Lower lobe of right lung (tissue), 2 donors: ENCODE measurements at regions of chr12 and their contacts with region 1.

Region 1: DNA sequence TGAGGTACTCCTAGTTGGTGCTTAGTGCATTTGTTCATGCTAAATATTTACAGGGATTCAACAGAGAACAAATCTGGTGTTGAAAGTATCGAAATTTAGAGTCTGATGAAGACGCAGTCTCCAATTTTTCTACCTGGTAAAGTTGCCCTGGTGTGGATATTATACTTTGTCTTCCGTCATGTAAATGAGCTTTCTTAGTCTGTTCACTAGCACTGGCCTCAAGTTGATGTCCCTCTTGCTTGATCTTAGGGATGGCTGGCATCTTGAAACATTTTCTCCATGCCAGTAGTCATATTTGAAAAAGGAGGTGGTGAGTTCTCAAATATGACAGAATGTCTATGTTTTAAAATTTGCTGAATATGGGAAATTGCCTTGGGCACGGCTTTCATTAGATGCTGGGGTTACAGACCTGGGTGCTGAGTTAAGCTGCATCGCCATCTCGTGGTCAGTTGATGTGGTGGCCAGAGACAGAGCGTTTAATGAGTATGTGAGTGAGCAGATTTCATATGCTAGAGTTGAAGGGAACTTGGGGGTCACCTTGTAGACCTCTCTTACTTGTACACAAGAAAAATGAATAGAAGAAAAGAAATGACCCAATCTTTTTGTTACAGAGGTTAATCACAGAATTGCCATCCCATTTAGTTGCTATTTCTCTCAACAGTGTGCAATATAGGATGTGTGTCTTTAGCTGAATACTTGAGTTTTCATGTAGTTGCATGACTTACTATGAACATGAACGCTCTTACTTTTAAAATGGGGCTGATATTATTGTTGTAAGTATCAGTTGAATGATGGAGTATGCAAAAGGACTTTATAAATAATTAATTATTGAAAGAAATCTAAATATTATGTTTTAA is 172.8 kb upstream of the DCN start:
- DNase-seq: peak; percentile 64
- ATAC-seq: peak; percentile 89 to 91
- H3K4me3 ChIP-seq: no peak overlapping the region
- H3K27ac ChIP-seq: no peak overlapping the region
- H3K4me1 ChIP-seq: no peaks in the 10 kb centered on the region
- H3K27me3 ChIP-seq: no peaks in the 10 kb centered on the region
- CTCF ChIP-seq: peak; percentile 82

Region 2: DNA sequence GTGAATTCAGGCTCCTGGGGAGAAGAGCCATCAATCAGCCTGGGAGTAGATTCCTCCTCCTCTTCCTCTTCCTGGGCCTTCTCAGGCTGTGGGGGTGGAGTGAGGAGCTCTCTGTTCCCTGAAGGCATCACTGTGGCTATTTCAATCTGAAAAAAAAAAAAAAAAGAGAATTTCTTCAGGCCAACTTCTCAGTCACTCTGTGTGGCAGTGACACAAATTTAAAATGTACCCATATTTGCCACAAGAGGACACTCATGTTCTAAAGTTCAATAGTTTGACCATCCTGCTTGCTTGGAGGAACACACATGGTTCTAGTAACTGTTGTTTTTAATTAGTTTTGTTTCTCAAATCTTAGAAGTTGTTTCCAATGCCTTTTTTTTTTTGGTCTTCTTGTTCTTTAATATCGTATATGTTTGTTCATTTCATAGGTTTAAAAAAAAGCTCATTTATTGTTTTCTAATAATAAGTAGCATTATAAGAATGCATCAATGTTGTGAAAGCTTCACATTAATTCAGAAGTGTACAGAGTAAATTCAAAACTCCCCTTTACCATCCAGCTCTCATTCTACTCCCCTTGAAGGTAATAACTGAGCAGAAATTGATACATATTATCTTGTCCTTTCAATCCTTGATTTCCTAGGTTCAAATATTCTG is 377.1 kb before region 1 on chr12:
- intact Hi-C with region 1: loop called (anchors 10 kb)
- DNase-seq: no peak
- ATAC-seq: peak; percentile 48 to 67
- H3K4me3 ChIP-seq: no peak overlapping the region
- H3K27ac ChIP-seq: no peak overlapping the region
- H3K4me1 ChIP-seq: no peaks in the 10 kb centered on the region
- H3K27me3 ChIP-seq: no peaks in the 10 kb centered on the region
- CTCF ChIP-seq: peak; percentile 42